Mammary epithelial cell (primary cell): ENCODE measurements at regions of chr15 and their contacts with region 1.

Region 1: GRCh38 chr15:99565299-99566156 is at the start of gene MEF2A:
- DNase-seq: peak; percentile 92
- H3K4me3 ChIP-seq: peak within 1 kb of the TSS; percentile 79 to 89 (median 80)
- H3K27ac ChIP-seq: peak within 1 kb of the TSS; percentile 90
- H3K4me1 ChIP-seq: peaks cover 8% of the 10 kb centered on the region
- H3K27me3 ChIP-seq: no peaks in the 10 kb centered on the region
- CTCF ChIP-seq: no peak
- total RNA-seq, gene MEF2A: 39.8 to 46.0 TPM

Region 2: GRCh38 chr15:99275525-99276128 is 289.9 kb before region 1 on chr15:
- CTCF ChIA-PET with region 1: no interaction called
- dilution Hi-C with region 1: no loop called
- in situ Hi-C with region 1: no loop called
- intact Hi-C with region 1: loop called (anchors 5 kb)
- DNase-seq: no peak
- H3K4me3 ChIP-seq: no peak overlapping the region
- H3K27ac ChIP-seq: no peak overlapping the region
- H3K4me1 ChIP-seq: no peaks in the 10 kb centered on the region
- H3K27me3 ChIP-seq: no peaks in the 10 kb centered on the region
- CTCF ChIP-seq: no peak

Region 3: GRCh38 chr15:99385865-99386264 is 179.7 kb before region 1 on chr15:
- CTCF ChIA-PET with region 1: no interaction called
- dilution Hi-C with region 1: no loop called
- in situ Hi-C with region 1: no loop called
- intact Hi-C with region 1: no loop called
- DNase-seq: no peak
- H3K4me3 ChIP-seq: no peak overlapping the region
- H3K27ac ChIP-seq: no peak overlapping the region
- H3K4me1 ChIP-seq: no peaks in the 10 kb centered on the region
- H3K27me3 ChIP-seq: no peaks in the 10 kb centered on the region
- CTCF ChIP-seq: no peak

Region 4: GRCh38 chr15:99409097-99409473 is 156.4 kb before region 1 on chr15:
- CTCF ChIA-PET with region 1: interaction called, 5 read pairs
- dilution Hi-C with region 1: no loop called
- in situ Hi-C with region 1: no loop called
- intact Hi-C with region 1: loop called (anchors 1 kb)
- DNase-seq: peak; percentile 58
- H3K4me3 ChIP-seq: no peak overlapping the region
- H3K27ac ChIP-seq: no peak overlapping the region
- H3K4me1 ChIP-seq: peaks cover 14% of the 10 kb centered on the region
- H3K27me3 ChIP-seq: no peaks in the 10 kb centered on the region
- CTCF ChIP-seq: peak; percentile 57 to 92

Region 5: DNA sequence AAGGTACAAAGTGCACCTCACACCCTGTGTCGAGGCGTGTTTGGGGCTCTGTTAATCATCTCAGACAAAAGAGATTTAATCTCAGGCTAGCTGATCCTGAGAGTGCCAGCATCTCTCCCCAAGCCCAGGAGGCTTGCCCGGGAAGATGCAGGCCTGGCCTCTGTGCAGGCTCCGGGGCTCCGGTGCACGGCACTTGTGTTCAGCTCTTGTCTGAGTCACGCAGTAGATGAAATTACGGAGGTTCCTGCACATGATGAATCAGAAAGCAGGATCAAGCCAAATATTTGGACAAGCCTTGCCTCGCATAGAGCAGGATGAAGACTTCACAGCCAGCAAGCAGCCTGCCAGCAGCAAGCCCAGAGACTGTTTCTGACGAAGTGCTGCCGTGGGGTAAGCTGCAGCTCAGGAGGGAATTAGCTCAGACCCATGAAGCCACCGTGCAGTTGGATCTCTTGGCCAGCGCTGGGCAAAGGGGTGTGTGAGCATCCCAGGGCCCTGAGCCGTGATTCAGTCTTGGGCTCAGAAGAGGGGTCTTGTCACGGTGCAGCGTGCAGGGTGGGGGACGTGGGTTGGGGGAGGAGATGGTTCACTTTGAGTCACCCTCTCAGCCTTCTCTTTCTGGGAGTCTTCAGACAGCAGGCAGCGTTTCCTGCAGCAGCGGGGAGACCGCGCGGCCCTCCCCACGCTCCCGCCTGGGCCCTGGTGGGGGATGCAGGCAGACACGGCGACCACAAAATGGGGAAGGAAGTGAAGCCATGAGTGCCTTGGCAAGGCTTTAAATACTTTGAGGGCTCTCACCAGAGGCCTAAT is 88.9 kb before region 1 on chr15:
- CTCF ChIA-PET with region 1: no interaction called
- dilution Hi-C with region 1: no loop called
- in situ Hi-C with region 1: no loop called
- intact Hi-C with region 1: loop called (anchors 5 kb)
- DNase-seq: peak; percentile 98
- H3K4me3 ChIP-seq: no peak overlapping the region
- H3K27ac ChIP-seq: peak overlapping the region; percentile 23
- H3K4me1 ChIP-seq: peaks cover 25% of the 10 kb centered on the region
- H3K27me3 ChIP-seq: no peaks in the 10 kb centered on the region
- CTCF ChIP-seq: no peak

Region 6: DNA sequence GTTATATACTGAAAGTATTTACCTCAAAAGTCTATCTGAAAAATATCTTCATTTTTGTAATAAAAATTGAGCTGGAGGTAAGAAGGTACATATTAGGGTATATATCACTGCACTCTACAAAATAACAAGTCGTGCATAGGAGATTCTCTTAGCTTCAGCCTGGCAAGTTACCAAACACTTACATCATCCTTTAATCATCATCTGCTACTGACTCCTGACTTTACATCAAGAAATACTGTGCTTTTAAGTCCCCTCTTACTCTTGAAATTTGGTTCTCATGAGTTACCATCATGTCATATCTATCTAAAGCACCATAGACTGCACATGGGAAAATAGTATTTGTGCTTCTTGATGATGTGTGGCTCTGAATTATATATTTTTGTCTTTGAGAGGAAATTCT is 116.9 kb after region 1 on chr15:
- CTCF ChIA-PET with region 1: no interaction called
- dilution Hi-C with region 1: no loop called
- in situ Hi-C with region 1: no loop called
- intact Hi-C with region 1: loop called (anchors 5 kb)
- DNase-seq: peak; percentile 70
- H3K4me3 ChIP-seq: no peak overlapping the region
- H3K27ac ChIP-seq: no peak overlapping the region
- H3K4me1 ChIP-seq: no peaks in the 10 kb centered on the region
- H3K27me3 ChIP-seq: no peaks in the 10 kb centered on the region
- CTCF ChIP-seq: no peak